OCI-LY7 (cell line): ENCODE measurements at regions of chr1 and their contacts with region 1.

Region 1: GRCh38 chr1:20574686-20575540 is 14.0 kb upstream of the CDA start:
- DNase-seq: peak; percentile 52
- H3K4me3 ChIP-seq: no peak overlapping the region
- H3K27ac ChIP-seq: no peak overlapping the region
- H3K4me1 ChIP-seq: no peaks in the 10 kb centered on the region
- CTCF ChIP-seq: peak; percentile 81

Region 2: DNA sequence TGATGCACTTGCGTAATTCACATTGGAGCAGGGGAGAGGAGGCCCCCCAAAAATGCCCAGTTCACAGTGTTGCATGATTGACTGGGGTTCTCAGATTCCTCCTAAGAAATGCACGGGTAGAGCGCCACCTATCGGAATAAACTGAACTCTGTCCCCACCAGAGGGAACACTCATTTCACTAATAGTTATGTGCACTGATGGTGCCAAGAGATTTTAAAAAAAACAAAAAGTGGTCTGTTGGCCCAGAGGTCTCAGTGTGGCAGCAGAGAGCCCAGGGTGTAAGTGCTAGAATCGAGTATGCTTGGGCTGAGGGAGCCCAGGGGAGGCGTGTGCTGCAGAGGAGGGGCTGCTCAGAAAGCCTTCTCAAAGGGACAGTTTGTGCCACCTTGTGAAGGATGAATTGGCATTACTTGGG is 65.3 kb after region 1 on chr1:
- CTCF ChIA-PET with region 1: no interaction called
- POLR2A ChIA-PET with region 1: no interaction called
- intact Hi-C with region 1: loop called (anchors 1 kb)
- DNase-seq: peak; percentile 75
- H3K4me3 ChIP-seq: no peak overlapping the region
- H3K27ac ChIP-seq: no peak overlapping the region
- H3K4me1 ChIP-seq: no peaks in the 10 kb centered on the region
- CTCF ChIP-seq: peak; percentile 98